ENCODE measurements at regions of chr17 and their contacts with region 1.

Region 1: DNA sequence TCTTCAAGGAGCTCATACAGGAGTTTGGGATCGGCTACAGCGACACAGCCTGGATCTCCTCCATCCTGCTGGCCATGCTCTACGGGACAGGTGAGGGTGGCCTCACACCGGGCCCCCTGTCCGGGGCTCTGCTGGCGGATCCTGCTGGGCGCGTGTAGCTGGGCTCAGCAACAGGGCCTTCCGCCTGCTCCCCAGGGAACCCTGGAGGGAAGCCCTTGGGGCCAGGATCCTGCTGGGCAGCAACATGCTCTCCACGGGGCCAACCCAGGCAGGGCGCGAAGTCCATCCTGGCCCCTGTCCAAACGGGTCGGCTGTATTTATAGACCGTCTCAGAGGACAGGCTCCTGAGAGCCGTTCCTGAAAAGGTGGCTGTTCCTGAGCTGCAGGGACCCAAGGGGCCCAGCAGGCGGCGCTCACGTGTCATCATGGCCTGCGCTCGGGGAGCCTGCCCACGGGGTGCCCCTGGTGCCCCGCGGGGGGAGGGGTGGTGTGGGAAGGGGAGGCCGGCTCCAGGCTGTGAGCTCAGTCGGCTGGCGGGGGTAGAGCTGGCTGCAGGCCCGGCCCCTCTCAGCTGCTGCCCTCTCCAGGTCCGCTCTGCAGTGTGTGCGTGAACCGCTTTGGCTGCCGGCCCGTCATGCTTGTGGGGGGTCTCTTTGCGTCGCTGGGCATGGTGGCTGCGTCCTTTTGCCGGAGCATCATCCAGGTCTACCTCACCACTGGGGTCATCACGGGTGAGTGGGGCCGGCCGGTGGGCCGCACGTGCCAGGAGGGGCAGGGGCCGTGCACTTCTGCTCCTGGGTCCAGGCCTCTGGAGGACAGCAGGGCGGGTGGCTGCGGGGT is 7.5 kb downstream of the SLC16A3 start:
- DNase-seq: peak; percentile 92
- ATAC-seq: peak; percentile 52
- H3K4me3 ChIP-seq: peak overlapping the region in 1 of 3 experiments; percentile 27; a peak in 1 of 6 replicates
- H3K27ac ChIP-seq: peak overlapping the region; percentile 59
- H3K4me1 ChIP-seq: peaks cover 94% of the 10 kb centered on the region
- H3K27me3 ChIP-seq: no peaks in the 10 kb centered on the region; a peak in 1 of 5 replicates
- CTCF ChIP-seq: peak; percentile 96
- EP300 ChIP-seq: peak in 1 of 2 experiments; percentile 53; a peak in 2 of 4 replicates
- POLR2A ChIP-seq: peak in 1 of 2 experiments; percentile 40; a peak in 1 of 4 replicates
- RAD21 ChIP-seq: peak; percentile 95

Region 2: GRCh38 chr17:82212331-82213250 is 23.8 kb before region 1 on chr17 and contains the start of gene CCDC57:
- CTCF ChIA-PET with region 1: no interaction called
- POLR2A ChIA-PET with region 1: interaction called, 117 read pairs
- in situ Hi-C with region 1: no loop called
- intact Hi-C with region 1: loop called (anchors 2 kb)
- DNase-seq: peak; percentile 61
- ATAC-seq: peak; percentile 65
- H3K4me3 ChIP-seq: peak within 1 kb of the TSS; percentile 87 to 98 (median 92)
- H3K27ac ChIP-seq: peak within 1 kb of the TSS; percentile 63
- H3K4me1 ChIP-seq: peaks cover 54% of the 10 kb centered on the region
- H3K27me3 ChIP-seq: no peaks in the 10 kb centered on the region
- CTCF ChIP-seq: no peak
- EP300 ChIP-seq: peak; percentile 20 to 23; a peak in 2 of 4 replicates
- POLR2A ChIP-seq: peak in 1 of 2 experiments; percentile 53; a peak in 1 of 4 replicates
- RAD21 ChIP-seq: 0 out of 2 replicates have a peak, but pooled peaks have one; percentile 58
- total RNA-seq, gene CCDC57: 54.8 and 59.9 TPM in 2 replicates

Region 3: DNA sequence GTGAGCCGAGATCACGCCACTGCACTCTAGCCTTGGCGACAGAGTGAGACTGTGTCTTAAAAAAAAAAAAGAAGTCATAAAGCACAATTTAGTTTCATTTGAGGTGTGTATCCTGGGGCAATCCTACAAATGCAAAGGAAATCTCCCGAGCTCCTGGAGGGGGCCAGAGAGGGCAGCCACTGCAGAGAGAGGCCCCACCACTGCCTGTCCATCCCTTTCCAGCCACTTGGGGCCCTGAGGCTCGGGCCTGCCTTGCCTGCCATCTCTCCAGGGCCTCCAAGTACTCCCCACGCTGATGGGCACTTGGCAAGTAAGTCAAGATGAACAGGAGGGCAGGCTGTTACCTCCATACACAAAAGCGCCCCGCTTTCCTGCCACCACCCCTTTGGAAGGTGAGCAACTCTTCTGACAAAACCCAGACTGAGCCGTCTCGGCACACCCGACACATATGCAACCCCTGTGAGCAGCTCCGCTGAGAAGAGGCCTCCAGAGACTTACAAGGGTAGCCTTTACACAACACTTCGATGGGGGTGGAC is 15.6 kb after region 1 on chr17:
- CTCF ChIA-PET with region 1: no interaction called
- POLR2A ChIA-PET with region 1: interaction called, 11 read pairs
- in situ Hi-C with region 1: no loop called
- intact Hi-C with region 1: no loop called
- DNase-seq: no peak
- ATAC-seq: peak; percentile 7; the same call in 2 of the 3 replicates
- H3K4me3 ChIP-seq: no peak overlapping the region
- H3K27ac ChIP-seq: no peak overlapping the region
- H3K4me1 ChIP-seq: no peaks in the 10 kb centered on the region
- H3K27me3 ChIP-seq: no peaks in the 10 kb centered on the region
- CTCF ChIP-seq: no peak
- EP300 ChIP-seq: no peak
- POLR2A ChIP-seq: no peak
- RAD21 ChIP-seq: no peak

Region 4: DNA sequence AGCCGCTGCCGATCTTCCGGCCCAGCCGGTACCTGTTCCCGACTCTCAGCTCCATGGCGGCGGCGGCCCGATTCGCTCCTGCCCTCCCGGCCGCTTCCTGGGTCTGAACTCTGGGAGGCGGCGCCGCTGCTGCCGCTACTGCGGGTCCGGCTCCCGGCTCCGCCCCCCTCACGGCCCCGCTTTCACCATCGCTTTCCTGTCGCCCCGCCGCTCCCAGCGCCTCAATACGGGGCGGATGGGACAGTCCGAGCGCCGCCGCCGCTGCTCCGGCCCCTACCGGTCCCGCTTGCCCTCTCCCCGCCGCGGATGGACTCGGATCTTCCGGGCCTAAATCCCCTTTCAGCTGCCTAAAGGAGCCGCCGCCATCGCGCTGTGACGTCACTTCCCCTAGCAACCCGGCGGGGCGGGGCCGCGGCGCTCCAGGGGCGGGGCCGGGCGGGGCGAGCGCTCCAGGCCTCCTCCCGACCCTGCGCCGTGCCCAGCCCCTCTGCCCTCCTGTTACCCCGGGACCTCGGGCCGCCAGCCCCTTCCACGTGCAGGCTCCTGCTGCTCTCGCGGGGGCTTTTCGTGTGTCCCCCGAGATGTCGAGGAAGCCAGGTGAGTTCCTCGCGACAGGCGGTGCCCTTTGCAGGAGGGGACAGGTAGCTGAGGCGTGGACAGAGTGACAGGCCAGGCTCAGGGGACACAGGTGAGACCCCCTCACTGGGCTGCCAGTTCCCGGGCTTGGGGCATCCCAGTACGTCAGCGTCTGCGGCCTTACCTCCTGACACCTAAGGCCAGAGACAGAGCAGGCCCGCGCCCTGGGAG is 37.2 kb after region 1 on chr17 and contains the start of gene CSNK1D:
- CTCF ChIA-PET with region 1: no interaction called
- POLR2A ChIA-PET with region 1: interaction called, 65 read pairs
- in situ Hi-C with region 1: no loop called
- intact Hi-C with region 1: no loop called
- DNase-seq: peak; percentile 85
- ATAC-seq: peak; percentile 83
- H3K4me3 ChIP-seq: peak within 1 kb of the TSS; percentile 88 to 97 (median 88)
- H3K27ac ChIP-seq: peak within 1 kb of the TSS; percentile 92
- H3K4me1 ChIP-seq: peaks cover 75% of the 10 kb centered on the region
- H3K27me3 ChIP-seq: no peaks in the 10 kb centered on the region; a peak in 1 of 5 replicates
- CTCF ChIP-seq: no peak; the same call in none of the 2 replicates
- EP300 ChIP-seq: peak in 1 of 2 experiments; percentile 42; a peak in 2 of 4 replicates
- POLR2A ChIP-seq: peak; percentile 71 to 92
- RAD21 ChIP-seq: peak; percentile 77
- total RNA-seq, gene CSNK1D: 28.4 and 31.5 TPM in 2 replicates

Region 5: GRCh38 chr17:82297714-82298537 is 61.6 kb after region 1 on chr17:
- CTCF ChIA-PET with region 1: interaction called, 3 read pairs
- POLR2A ChIA-PET with region 1: interaction called, 89 read pairs
- in situ Hi-C with region 1: no loop called
- intact Hi-C with region 1: no loop called
- DNase-seq: no peak
- ATAC-seq: peak; percentile 45
- H3K4me3 ChIP-seq: peak overlapping the region; percentile 52 to 78 (median 56)
- H3K27ac ChIP-seq: peak overlapping the region; percentile 8
- H3K4me1 ChIP-seq: peaks cover 96% of the 10 kb centered on the region
- H3K27me3 ChIP-seq: no peaks in the 10 kb centered on the region
- CTCF ChIP-seq: peak; percentile 47
- EP300 ChIP-seq: peak; percentile 39 to 59; a peak in 1 of 4 replicates
- POLR2A ChIP-seq: no peak; a peak in 1 of 4 replicates
- RAD21 ChIP-seq: no peak

Region 6: GRCh38 chr17:82320956-82321927 is 84.9 kb after region 1 on chr17:
- CTCF ChIA-PET with region 1: interaction called, 3 read pairs
- POLR2A ChIA-PET with region 1: interaction called, 40 read pairs
- in situ Hi-C with region 1: loop called (anchors 5 kb)
- intact Hi-C with region 1: no loop called
- DNase-seq: no peak
- ATAC-seq: peak; percentile 3; the same call in 1 of the 3 replicates
- H3K4me3 ChIP-seq: peak overlapping the region; percentile 22 to 71 (median 55); a peak in 5 of 6 replicates
- H3K27ac ChIP-seq: peak overlapping the region; percentile 63
- H3K4me1 ChIP-seq: peaks cover 90% of the 10 kb centered on the region
- H3K27me3 ChIP-seq: no peaks in the 10 kb centered on the region; a peak in 1 of 5 replicates
- CTCF ChIP-seq: peak; percentile 92
- EP300 ChIP-seq: no peak
- POLR2A ChIP-seq: no peak
- RAD21 ChIP-seq: peak; percentile 98

Region 7: DNA sequence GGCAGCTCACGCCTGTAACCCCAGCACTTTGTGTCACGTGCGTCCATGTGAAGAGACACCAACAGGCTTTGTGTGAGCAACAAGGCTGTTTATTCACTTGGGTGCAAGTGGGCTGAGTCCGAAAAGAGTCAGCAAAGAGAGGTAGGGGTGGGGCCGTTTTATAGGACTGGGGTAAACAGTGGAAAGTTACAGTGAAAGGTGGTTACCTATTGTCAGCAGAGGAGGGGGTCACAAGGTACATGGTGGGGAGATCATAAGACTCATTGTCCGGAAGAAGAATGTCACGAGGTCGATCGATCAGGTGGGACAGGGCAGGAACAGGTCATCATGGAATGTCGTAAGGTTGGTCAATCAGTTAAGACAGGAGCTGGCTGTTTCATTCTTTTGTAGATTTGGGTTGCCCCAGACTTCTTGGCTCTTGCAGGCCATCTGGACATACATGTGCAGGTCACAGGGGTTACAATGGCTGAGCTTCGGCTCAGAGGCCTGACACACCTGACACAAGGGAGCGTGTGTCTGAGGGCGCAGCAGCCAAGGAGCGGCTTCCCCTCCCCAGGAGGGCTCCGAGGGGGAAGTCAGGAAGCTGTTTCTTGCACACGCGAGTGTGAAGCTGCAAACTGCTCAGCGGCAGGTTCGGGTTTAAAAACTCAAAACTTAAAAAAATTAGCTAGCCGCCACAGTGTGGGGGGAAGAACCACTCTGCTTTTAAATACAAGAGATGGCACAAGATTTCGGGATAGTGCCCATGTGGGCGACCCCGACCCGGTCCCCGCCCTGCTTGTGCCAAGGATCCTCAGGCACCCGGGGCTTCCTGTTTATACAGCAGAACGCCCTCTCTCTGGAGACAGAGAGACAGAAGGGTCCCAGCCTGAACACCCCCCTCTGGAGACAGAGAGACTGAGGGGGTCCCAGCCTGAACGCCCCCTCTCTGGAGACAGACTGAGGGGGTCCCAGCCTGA is 110.3 kb after region 1 on chr17:
- CTCF ChIA-PET with region 1: no interaction called
- POLR2A ChIA-PET with region 1: interaction called, 16 read pairs
- in situ Hi-C with region 1: no loop called
- intact Hi-C with region 1: no loop called
- DNase-seq: peak; percentile 100
- ATAC-seq: peak; percentile 24
- H3K4me3 ChIP-seq: no peak overlapping the region; a peak in 1 of 6 replicates
- H3K27ac ChIP-seq: peak overlapping the region; percentile 83
- H3K4me1 ChIP-seq: peaks cover 94% of the 10 kb centered on the region
- H3K27me3 ChIP-seq: no peaks in the 10 kb centered on the region
- CTCF ChIP-seq: peak; percentile 20; the same call in 1 of the 2 replicates
- EP300 ChIP-seq: peak; percentile 90 to 98
- POLR2A ChIP-seq: peak; percentile 52 to 78; a peak in 3 of 4 replicates
- RAD21 ChIP-seq: peak; percentile 68